Right ventricle myocardium superior (tissue), 1 donor: ENCODE measurements at regions of chr17 and their contacts with region 1.

Region 1: DNA sequence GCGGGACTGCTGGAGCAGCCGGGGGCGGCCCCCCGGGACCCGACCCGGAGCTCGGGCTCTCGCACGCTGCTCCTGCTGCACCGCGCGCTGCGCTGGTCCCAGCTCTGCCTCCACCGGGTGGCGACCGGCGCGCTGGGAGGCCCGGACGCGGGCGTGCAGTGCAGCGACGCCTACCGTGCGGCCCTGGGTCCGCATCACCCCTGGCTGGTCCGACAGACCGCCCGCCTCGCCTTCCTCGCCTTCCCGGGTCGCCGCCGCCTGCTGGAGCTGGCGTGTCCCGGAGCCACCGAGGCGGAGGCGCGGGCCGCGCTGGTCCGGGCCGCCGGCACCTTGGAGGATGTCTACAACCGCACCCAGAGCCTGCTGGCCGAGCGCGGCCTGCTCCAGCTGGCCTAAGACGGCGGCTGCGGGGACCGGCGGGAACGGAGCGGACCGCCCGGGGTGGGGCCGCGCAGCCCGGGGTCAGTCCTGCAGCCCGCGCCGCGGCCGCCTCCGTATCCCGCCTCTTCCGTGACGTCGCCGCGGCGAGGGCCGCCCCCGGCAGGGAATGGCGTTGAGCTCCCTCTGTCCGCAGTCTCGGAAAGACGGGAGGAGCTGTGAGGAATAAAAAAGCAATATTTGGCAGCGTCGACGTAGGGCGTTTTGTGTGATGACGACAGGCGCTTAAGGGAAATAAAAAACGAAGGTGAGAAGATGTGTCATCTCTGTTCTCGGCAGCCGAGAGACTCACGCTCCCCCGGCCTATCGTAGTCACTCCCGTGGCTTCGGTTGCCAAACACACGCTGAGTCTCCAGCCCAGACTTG is 1.3 kb downstream of the GLTPD2 start:
- DNase-seq: peak; percentile 91
- ATAC-seq: peak; percentile 97

Region 2: DNA sequence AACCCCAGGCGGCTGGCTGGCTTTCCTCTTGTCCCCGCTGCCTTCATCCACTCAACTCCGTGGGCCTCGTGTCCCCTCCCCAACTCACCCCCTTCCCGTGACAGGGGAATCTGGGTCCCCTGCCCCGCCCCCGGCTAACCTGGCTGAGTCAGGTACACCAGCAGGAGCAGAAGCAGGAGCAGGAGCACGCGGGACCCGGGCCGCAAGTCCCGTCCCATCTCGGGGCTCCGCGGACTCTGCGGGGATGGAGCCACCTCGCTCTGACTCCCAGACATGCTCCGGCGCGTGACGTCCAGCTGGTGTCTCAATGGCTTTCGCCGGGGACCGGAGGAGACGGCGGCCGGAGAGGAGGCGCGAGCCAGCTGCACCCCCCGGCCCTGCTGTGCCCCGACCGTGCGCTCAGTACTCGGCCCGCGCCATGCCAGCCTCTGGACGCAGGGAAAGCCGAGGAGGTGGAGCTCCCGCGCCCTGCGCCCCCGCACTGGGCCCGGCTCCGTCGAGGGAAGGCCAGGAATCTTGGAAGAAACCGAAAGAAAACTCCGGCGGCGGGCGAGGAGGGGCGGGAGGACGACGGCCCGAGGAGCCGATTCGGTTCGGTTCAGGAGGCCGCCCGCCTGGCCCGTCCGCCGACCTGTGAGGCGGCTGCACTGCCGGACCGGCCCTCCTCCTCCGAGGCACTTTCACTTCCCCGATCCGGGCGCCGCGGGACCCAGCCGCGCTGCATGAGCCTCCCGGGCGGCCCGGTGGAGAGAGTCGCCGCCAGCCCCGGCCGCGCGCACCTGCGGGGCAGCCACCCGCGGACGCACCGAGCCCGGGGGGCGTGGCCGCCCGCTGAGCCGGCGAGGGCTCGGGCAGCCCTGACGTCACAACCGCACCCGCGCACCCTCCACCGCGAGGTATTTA is 50.7 kb before region 1 on chr17 and contains the starts of genes CXCL16 and ZMYND15:
- intact Hi-C with region 1: loop called (anchors 10 kb)
- DNase-seq: peak; percentile 78
- ATAC-seq: peak; percentile 78
- total RNA-seq, gene CXCL16: 2.7 TPM
- total RNA-seq, gene ZMYND15: not detected

Region 3: DNA sequence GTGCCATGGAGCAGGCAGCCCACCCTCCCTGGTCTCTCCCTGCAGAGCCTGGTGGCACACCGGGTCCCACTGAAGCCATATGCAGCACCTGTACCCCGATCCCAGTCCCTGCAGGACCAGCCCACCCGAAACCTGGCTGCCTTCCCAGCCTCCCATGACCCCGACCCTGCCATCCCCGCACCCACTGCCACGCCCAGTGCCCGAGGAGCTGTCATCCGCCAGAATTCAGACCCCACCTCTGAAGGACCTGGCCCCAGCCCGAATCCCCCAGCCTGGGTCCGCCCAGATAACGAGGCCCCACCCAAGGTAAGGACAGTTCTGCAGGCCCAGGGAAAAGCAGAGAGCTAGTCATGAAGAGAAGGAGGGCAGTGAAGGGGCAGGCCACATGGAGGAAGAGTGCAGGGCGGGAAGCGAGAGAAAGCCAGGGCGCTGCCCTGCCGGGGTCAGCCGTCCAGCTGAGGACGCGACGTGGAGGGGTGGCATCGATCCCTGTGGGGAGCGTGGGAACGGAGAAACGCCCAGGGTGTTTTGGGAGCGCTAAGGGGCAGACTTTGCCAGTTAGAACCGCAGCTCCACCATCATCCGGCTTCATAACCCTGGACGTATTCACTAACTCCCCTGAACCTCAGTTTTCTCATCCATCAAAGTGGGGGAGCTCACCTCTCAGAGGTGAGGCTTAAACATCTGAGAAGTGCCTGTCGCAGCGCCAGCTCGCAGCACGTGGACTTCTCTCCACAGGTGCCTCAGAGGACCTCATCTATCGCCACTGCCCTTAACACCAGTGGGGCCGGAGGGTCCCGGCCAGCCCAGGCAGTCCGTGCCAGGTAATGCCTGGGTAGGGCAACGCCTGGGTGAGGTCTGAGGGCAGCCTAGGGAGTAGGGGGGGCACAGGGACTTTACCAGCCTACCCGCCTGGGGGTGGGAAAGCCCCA is 101.6 kb after region 1 on chr17:
- intact Hi-C with region 1: loop called (anchors 2 kb)
- DNase-seq: peak; percentile 6
- ATAC-seq: no peak